RWPE1 (cell line): ENCODE measurements at regions of chr9 and their contacts with region 1.

Region 1: DNA sequence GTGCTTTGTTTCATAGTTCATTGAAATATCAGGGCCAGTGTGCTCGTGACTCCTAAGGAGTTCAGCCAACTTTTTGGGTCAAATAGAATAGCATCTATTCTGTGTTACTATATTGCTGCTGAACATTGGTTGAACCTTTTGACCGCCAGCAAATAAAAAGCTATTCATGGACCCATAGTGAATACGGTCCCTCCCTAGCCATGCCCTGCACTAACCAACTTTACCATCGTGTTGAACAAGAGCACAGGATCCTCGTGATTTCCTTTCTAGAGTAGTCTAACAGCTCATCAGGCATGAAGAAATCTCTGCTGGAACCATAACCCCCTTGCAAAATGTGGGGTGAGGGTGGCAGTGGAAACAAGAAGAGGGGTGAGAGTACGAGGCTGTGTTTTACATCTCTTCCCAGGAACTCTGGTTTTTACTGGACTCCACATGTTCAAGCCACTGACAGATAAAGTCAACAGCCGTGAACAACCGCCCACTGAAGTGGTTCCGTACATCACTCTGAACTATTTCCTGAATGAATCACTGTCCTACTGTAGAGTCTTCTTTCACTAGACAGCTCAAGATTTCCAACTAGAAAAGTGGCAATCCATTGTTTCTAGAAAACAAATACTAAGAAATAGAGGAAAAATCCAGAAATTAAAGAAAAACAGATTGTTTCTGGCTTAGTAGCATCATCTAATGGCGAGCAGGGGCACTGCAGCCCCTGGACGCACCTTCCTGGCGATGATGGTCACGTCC is 70.1 kb upstream of the SPATA31E1 start:
- DNase-seq: peak; percentile 68
- H3K27ac ChIP-seq: no peak overlapping the region
- CTCF ChIP-seq: peak; percentile 93

Region 2: GRCh38 chr9:87678650-87679515 is 133.7 kb before region 1 on chr9:
- CTCF ChIA-PET with region 1: interaction called, 36 read pairs
- POLR2A ChIA-PET with region 1: no interaction called
- DNase-seq: peak; percentile 82
- H3K27ac ChIP-seq: no peak overlapping the region
- CTCF ChIP-seq: peak; percentile 74

Region 3: GRCh38 chr9:87684627-87685219 is 127.8 kb before region 1 on chr9:
- CTCF ChIA-PET with region 1: interaction called, 36 read pairs
- POLR2A ChIA-PET with region 1: no interaction called
- DNase-seq: peak; percentile 80
- H3K27ac ChIP-seq: no peak overlapping the region
- CTCF ChIP-seq: peak; percentile 73

Region 4: GRCh38 chr9:87800456-87800855 is 12.1 kb before region 1 on chr9:
- CTCF ChIA-PET with region 1: interaction called, 12 read pairs
- POLR2A ChIA-PET with region 1: no interaction called
- DNase-seq: no peak
- H3K27ac ChIP-seq: no peak overlapping the region
- CTCF ChIP-seq: no peak